Activated CD4-positive, alpha-beta T cell treated with anti-CD3 and anti-CD28 coated beads, Interleukin-2, amount 10 ng/mL, durations not matched to agents 7 days and 5 days (primary cell): ENCODE measurements at regions of chr3 and their contacts with region 1.

Region 1: GRCh38 chr3:46488735-46489361 is 8.9 kb upstream of the RTP3 start:
- DNase-seq: peak; percentile 95
- H3K4me3 Mint-ChIP-seq: peak overlapping the region; percentile 9
- H3K27ac Mint-ChIP-seq: peak overlapping the region; percentile 60
- H3K4me1 Mint-ChIP-seq: peaks cover 27% of the 10 kb centered on the region
- H3K27me3 Mint-ChIP-seq: peaks cover 12% of the 10 kb centered on the region

Region 2: DNA sequence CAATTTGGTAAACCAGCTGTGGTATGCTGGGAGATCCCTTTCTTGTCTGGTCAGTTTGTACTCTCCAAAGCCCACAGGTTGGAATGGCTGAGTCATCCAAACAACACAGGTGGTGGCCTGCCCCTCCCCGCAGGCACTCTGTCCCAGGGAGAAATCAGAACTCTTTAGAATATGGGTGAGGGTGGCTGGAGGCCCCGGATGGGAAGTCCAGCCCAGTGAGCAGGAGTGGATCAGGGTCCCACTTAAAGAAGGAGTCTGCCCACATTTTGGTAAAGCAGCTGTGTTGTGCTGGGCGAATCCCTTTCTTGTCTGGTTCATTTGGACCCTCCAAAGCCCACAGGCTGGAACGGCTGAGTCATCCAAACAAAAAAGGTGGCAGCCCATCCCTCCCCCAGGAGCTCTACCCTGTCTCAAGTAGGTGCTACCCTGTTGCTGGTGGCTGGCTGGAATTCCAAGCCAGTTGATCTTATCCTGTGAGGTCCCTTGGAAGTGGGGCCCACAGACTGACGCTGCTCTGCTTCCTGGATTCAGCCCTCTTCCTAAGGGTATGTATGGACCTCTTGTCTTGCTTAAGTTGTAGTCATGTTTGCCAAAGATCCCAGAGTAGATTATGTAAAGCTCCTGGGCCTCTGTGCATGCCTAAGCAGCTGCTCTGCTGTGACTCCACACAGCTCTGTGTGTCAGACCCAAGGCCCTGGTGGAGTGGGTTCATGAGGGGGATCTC is 325.4 kb before region 1 on chr3:
- CTCF ChIA-PET with region 1: no interaction called
- POLR2A ChIA-PET with region 1: no interaction called
- DNase-seq: no peak
- H3K4me3 Mint-ChIP-seq: no peak overlapping the region
- H3K27ac Mint-ChIP-seq: no peak overlapping the region
- H3K4me1 Mint-ChIP-seq: no peaks in the 10 kb centered on the region
- H3K27me3 Mint-ChIP-seq: peaks cover 59% of the 10 kb centered on the region

Region 3: DNA sequence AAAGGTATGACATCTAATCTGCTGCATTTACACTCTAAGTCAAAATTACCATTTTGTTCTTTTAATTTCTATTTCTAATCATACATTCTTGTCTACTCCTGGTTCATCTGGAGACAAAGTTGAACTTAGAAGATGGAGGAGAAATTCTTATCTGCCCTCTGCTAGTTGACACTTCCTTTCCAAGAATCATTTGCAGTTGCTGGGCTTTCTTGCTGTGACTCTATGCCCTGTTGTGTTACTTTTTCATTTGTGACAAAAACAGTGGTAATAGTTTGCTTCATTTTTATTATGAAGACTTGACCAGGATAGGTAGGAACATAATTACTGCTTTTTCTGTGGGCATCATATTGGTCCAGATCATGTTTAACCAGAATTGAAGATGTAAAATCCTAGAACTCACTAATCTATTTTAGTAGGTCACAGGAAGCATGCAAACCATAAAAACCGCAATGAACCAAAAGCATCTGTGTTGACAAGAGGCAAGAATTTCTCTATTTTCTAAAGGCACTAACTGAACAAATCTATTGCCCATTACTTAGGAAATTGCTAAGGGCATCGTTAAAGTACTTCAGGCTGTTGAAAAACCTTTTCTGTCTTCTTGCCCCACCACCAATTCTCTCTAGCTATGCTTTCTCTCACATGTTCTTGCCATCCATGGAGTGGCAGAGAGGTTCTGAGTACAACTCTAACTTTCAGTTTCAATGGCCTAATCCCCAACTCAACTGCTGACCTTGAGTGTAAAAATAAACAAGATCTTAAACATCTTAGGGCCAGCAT is 139.2 kb before region 1 on chr3:
- CTCF ChIA-PET with region 1: no interaction called
- POLR2A ChIA-PET with region 1: no interaction called
- DNase-seq: peak; percentile 52
- H3K4me3 Mint-ChIP-seq: peak overlapping the region; percentile 48
- H3K27ac Mint-ChIP-seq: peak overlapping the region; percentile 87
- H3K4me1 Mint-ChIP-seq: peaks cover 71% of the 10 kb centered on the region
- H3K27me3 Mint-ChIP-seq: peaks cover 27% of the 10 kb centered on the region

Region 4: DNA sequence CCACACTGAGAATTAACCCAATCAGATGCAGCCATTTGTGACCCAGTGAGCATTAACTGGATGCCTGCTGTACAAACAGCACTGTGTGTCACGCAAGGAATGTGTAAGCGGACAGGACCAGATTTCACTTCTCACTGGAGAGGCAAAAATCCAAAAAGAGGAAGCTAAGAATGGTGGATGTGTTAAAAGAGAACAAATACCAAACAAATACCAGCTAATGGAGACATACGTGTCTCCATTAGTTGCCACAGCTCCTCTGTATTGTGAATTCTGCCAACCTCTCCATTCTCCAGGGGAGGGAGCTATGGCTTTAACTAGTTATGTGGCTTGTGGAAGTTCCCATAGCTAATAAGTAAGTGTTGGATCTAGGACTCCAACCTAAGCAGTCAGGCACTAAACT is 26.7 kb before region 1 on chr3:
- CTCF ChIA-PET with region 1: interaction called, 21 read pairs
- POLR2A ChIA-PET with region 1: no interaction called
- DNase-seq: no peak
- H3K4me3 Mint-ChIP-seq: no peak overlapping the region
- H3K27ac Mint-ChIP-seq: no peak overlapping the region
- H3K4me1 Mint-ChIP-seq: peaks cover 2% of the 10 kb centered on the region
- H3K27me3 Mint-ChIP-seq: peaks cover 72% of the 10 kb centered on the region

Region 5: GRCh38 chr3:46469680-46470357 is 19.0 kb before region 1 on chr3:
- CTCF ChIA-PET with region 1: interaction called, 21 read pairs
- POLR2A ChIA-PET with region 1: no interaction called
- DNase-seq: no peak
- H3K4me3 Mint-ChIP-seq: no peak overlapping the region
- H3K27ac Mint-ChIP-seq: no peak overlapping the region
- H3K4me1 Mint-ChIP-seq: no peaks in the 10 kb centered on the region
- H3K27me3 Mint-ChIP-seq: peaks cover 46% of the 10 kb centered on the region

Region 6: DNA sequence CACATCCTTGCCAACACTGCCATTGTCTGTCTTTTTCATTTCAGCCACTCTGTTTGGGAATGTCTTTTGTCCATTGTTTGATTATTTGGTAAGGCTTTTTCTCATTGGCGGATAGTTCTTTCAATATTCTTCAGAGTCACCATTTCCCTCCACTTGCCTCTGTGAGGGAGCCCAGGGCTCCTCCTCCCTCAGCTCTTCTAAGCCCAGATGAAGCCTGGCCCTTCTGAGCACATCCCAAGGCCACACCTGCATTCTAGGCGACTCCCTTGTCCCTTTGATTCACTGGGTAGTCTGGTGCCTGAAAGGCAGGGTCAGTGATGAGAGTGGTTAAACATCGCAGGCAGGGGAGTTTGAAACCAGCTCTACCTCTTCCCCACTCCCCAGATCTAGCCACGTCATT is 11.7 kb before region 1 on chr3:
- CTCF ChIA-PET with region 1: interaction called, 15 read pairs
- POLR2A ChIA-PET with region 1: no interaction called
- DNase-seq: no peak
- H3K4me3 Mint-ChIP-seq: no peak overlapping the region
- H3K27ac Mint-ChIP-seq: no peak overlapping the region
- H3K4me1 Mint-ChIP-seq: no peaks in the 10 kb centered on the region
- H3K27me3 Mint-ChIP-seq: peaks cover 51% of the 10 kb centered on the region

Region 7: DNA sequence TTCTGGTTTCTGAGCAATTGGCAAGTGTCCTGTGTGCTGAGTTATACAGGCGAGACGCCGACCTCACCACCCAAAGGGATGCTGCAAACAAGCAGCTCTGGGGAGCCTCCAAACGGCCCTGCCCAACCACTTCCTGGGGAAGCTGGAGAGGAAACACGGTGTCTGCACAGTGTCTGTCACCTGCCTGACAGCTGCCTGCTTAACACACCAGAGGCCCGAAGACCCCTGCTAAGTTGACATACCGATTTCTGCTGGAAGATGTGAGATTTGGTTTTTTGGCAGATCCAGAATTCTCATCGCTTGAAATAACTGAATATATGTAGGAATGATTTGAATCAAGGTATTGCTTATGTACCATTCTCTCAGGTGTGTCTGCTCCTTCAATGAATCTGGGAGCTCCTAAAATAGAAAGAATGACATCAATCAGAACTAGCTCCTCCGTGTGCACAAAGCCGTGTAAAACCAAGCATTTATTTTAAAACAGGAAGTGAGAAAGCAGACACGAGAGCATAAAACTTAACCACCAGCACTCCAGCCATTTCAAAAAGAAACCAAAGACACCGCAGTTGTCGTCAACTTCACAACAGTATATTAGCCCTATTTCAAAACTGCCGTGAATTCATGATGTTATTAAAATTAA is 50.1 kb after region 1 on chr3:
- CTCF ChIA-PET with region 1: interaction called, 51 read pairs
- POLR2A ChIA-PET with region 1: no interaction called
- DNase-seq: peak; percentile 91
- H3K4me3 Mint-ChIP-seq: peak overlapping the region; percentile 67
- H3K27ac Mint-ChIP-seq: peak overlapping the region; percentile 90
- H3K4me1 Mint-ChIP-seq: peaks cover 76% of the 10 kb centered on the region
- H3K27me3 Mint-ChIP-seq: peaks cover 14% of the 10 kb centered on the region

Region 8: DNA sequence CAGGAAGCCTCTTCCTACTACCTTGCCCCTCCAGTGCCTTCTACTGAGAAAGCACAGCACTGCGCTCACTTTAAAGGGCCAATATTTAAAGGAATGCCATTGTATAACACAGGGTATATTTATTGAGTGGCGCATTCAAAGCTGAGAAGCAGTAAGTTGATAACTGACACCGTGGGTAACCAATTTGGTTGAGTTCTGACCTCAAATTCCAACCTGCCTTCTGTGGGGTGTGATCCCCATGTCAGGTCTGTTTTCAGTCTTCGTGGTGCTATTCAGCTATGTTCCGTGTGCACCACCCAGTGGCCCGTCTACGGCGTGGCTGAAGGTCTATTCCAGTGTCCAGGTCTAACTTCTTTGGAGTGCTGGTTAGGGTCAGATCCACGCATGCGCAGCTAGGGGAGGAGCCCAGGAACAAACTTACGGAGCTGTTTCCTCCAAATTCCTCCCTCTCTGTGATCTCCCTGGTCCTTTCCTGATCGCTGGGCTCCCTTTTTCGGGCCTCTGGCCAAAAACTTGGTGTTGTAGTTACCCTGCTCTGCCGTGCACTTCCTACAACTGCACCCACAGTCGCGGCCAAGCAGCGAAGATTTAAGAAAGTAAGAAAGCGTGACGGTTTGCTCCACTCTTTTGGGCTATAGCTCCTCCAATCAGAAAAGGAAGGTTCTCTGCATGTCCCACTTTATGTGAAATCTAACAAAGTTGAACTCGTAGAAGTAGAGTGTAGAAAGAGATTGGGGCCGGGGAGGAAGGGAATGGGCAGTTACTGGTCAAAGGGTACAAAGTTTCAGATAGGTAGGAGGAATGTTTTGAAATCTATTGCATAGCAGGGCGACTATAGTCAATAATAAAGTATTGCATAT is 69.6 kb after region 1 on chr3:
- CTCF ChIA-PET with region 1: interaction called, 69 read pairs
- POLR2A ChIA-PET with region 1: no interaction called
- DNase-seq: peak; percentile 76
- H3K4me3 Mint-ChIP-seq: peak overlapping the region; percentile 65
- H3K27ac Mint-ChIP-seq: peak overlapping the region; percentile 7
- H3K4me1 Mint-ChIP-seq: peaks cover 21% of the 10 kb centered on the region
- H3K27me3 Mint-ChIP-seq: peaks cover 34% of the 10 kb centered on the region

Region 9: DNA sequence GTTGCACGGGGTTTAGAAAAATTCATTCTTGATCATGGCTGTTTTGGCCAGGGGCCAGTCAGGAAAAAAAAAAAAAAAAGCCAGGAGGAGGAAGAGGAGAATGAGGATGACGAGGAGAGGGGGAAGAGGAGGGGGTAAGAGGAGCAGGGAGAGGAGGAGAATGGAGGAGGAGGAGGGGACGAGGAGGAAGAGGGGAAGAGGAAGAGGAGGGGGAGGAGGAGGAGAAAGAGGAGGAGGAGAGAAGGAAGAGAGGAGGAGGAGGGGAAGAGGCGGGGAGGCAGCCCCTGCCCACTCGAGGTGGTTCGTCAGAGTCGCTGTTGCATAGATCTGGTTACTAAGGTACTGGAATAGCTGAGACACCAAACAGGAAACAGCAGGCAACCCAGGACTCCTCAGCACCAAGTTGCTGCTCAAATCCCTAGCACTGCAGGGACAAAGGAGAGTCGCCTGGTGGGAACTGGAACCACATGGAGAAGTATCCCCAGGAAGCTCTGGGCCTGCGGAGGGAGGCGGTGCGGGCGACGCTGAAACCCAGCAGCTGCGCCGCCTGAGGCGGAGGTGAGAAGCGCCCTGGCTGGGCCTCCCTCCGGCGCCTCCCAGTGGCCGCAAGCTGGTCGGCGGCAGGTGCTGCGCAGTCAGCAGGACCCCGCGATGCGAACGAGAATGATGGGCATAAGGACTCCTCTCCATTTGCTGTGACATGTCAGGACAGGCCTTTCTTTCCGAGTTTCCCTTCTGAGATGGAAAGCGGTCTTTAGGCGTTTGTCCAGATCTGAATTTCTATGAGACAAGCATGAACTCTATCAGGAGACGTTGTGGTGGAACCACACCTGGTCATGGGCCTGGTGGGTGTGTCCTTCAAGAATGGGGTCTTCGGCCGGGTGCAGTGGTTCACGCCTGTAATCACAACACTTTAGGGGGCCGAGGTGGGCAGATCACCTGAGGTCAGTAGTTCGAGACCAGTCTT is 141.0 kb after region 1 on chr3:
- CTCF ChIA-PET with region 1: interaction called, 67 read pairs
- POLR2A ChIA-PET with region 1: interaction called, 11 read pairs
- DNase-seq: peak; percentile 78
- H3K4me3 Mint-ChIP-seq: no peak overlapping the region
- H3K27ac Mint-ChIP-seq: peak overlapping the region; percentile 74
- H3K4me1 Mint-ChIP-seq: peaks cover 26% of the 10 kb centered on the region
- H3K27me3 Mint-ChIP-seq: peaks cover 4% of the 10 kb centered on the region